CD4-positive, alpha-beta T cell (primary cell): ENCODE measurements at regions of chr12 and their contacts with region 1.

Region 1: GRCh38 chr12:55931780-55932550 is 1.0 kb downstream of the DGKA start:
- DNase-seq: peak in 8 of 14 experiments; percentile 11 to 63 (median 52)
- ATAC-seq: no peak
- H3K4me3 ChIP-seq: peak overlapping the region; percentile 98
- H3K4me3 Mint-ChIP-seq: peak overlapping the region; percentile 99
- H3K27ac ChIP-seq: peak overlapping the region; percentile 83 to 93
- H3K27ac Mint-ChIP-seq: peak overlapping the region; percentile 97
- H3K4me1 ChIP-seq: peaks cover 68% of the 10 kb centered on the region
- H3K4me1 Mint-ChIP-seq: peaks cover 57% of the 10 kb centered on the region
- H3K27me3 ChIP-seq: no peaks in the 10 kb centered on the region
- H3K27me3 Mint-ChIP-seq: no peaks in the 10 kb centered on the region
- CTCF ChIP-seq: no peak

Region 2: GRCh38 chr12:55874443-55874842 is 57.5 kb before region 1 on chr12:
- CTCF ChIA-PET with region 1: no interaction called
- POLR2A ChIA-PET with region 1: no interaction called
- intact Hi-C with region 1: no loop called
- DNase-seq: no peak
- ATAC-seq: no peak
- H3K4me3 ChIP-seq: no peak overlapping the region
- H3K4me3 Mint-ChIP-seq: no peak overlapping the region
- H3K27ac ChIP-seq: no peak overlapping the region
- H3K27ac Mint-ChIP-seq: no peak overlapping the region
- H3K4me1 ChIP-seq: no peaks in the 10 kb centered on the region
- H3K4me1 Mint-ChIP-seq: no peaks in the 10 kb centered on the region
- H3K27me3 ChIP-seq: no peaks in the 10 kb centered on the region
- H3K27me3 Mint-ChIP-seq: no peaks in the 10 kb centered on the region
- CTCF ChIP-seq: no peak

Region 3: DNA sequence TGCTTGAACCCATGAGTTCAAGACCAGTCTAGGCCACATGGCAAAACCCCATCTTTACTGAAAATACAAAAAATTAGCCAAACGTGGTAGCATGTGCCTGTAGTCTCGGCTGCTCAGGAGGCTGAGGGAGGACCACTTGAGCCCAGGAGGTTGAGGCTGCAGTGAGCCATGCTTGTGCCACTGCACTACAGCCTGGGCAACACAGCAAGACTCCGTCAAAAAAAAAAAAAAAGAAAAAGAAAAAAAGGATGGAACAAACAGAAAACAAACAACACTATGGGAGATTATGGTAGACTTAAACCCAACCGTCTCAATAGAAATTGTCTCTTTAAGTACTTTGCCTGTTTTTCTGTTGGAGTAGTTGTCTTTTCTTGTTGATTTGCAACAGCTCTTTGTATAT is 40.7 kb before region 1 on chr12:
- CTCF ChIA-PET with region 1: no interaction called
- POLR2A ChIA-PET with region 1: no interaction called
- intact Hi-C with region 1: no loop called
- DNase-seq: no peak
- ATAC-seq: no peak
- H3K4me3 ChIP-seq: no peak overlapping the region
- H3K4me3 Mint-ChIP-seq: no peak overlapping the region
- H3K27ac ChIP-seq: no peak overlapping the region
- H3K27ac Mint-ChIP-seq: no peak overlapping the region
- H3K4me1 ChIP-seq: no peaks in the 10 kb centered on the region
- H3K4me1 Mint-ChIP-seq: no peaks in the 10 kb centered on the region
- H3K27me3 ChIP-seq: no peaks in the 10 kb centered on the region
- H3K27me3 Mint-ChIP-seq: no peaks in the 10 kb centered on the region
- CTCF ChIP-seq: no peak

Region 4: GRCh38 chr12:55955800-55956508 is 24.0 kb after region 1 on chr12:
- CTCF ChIA-PET with region 1: interaction called, 3 read pairs
- POLR2A ChIA-PET with region 1: interaction called, 41 read pairs
- intact Hi-C with region 1: no loop called
- DNase-seq: peak in 12 of 14 experiments; percentile 24 to 75 (median 50)
- ATAC-seq: peak; percentile 77
- H3K4me3 ChIP-seq: no peak overlapping the region
- H3K4me3 Mint-ChIP-seq: no peak overlapping the region
- H3K27ac ChIP-seq: peak overlapping the region in 1 of 2 donors; percentile 24
- H3K27ac Mint-ChIP-seq: peak overlapping the region; percentile 66
- H3K4me1 ChIP-seq: peaks cover 20% of the 10 kb centered on the region
- H3K4me1 Mint-ChIP-seq: peaks cover 25% of the 10 kb centered on the region
- H3K27me3 ChIP-seq: no peaks in the 10 kb centered on the region
- H3K27me3 Mint-ChIP-seq: no peaks in the 10 kb centered on the region
- CTCF ChIP-seq: peak; percentile 47

Region 5: DNA sequence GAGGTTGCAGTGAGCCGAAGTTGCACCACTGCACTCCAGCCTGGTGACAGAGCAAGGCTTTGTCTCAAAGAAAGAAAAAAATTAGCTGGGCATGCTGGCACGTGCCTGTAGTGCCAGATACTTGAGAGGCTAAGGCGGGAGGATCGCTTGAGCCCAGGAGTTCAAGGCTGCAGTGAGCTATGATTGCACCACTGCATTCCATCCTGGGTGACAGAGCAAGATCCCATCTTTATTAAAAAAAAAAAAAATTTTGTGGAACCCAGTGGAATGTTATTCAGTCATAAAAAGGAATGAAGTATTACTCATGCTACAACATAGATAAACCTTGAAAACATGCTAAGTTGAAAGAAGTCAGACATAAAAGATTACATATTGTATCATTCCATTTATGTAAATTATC is 139.7 kb after region 1 on chr12:
- CTCF ChIA-PET with region 1: no interaction called
- POLR2A ChIA-PET with region 1: no interaction called
- intact Hi-C with region 1: no loop called
- DNase-seq: no peak
- ATAC-seq: no peak
- H3K4me3 ChIP-seq: no peak overlapping the region
- H3K4me3 Mint-ChIP-seq: no peak overlapping the region
- H3K27ac ChIP-seq: no peak overlapping the region
- H3K27ac Mint-ChIP-seq: no peak overlapping the region
- H3K4me1 ChIP-seq: no peaks in the 10 kb centered on the region
- H3K4me1 Mint-ChIP-seq: no peaks in the 10 kb centered on the region
- H3K27me3 ChIP-seq: no peaks in the 10 kb centered on the region
- H3K27me3 Mint-ChIP-seq: no peaks in the 10 kb centered on the region
- CTCF ChIP-seq: no peak